PC-3 (cell line): ENCODE measurements at regions of chr12 and their contacts with region 1.

Region 1: DNA sequence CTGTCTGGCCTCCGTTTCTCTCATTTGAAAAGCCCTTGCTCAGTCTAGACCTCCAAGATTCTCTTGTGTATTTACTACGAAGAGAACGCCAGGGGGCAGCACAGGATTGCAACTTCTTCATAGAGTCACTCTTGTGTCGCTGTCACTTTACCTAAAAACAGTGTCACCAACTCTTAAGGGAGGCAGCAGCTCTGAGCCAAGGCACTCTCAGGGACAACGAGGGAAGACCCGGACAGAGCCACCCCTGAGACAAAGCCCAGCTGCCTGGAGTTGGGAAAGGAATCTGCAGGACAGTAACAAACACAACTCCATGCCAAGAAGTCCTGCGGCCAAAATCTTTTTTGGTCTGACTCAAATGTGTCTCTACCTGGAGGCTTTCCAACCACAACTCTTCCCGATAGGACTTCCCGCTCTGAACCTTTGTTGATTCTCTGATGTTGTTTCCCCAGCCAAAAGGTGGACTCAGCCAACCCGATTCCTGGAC is 9.6 kb upstream of the RPAP3 start:
- DNase-seq: peak; percentile 91
- ATAC-seq: peak; percentile 74
- H3K4me3 ChIP-seq: peak overlapping the region; percentile 50
- H3K27ac ChIP-seq: no peak overlapping the region
- H3K4me1 ChIP-seq: peaks cover 13% of the 10 kb centered on the region; the same call in 1 of the 2 replicates
- H3K27me3 ChIP-seq: no peaks in the 10 kb centered on the region
- CTCF ChIP-seq: peak; percentile 96

Region 2: DNA sequence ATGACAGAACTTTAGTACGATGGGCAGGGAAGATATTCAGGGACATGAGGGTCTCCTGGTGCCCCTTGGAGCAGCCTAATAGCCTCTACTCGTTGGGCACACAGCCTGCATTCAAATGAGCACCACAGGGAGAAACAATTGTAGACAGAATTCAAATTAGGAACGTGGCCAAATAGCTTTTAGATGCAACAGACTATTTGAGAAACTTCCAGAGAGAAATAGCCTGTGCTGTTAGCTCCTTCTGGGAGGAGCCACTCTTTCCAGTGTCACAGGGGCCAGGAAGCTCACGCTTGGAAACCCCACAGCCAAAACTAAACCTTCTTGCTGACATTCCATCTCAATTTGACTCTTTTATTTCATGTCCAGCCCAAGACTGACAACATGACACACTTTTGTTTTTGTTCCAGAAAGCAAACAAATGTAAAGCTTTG is 124.1 kb before region 1 on chr12:
- CTCF ChIA-PET with region 1: no interaction called
- POLR2A ChIA-PET with region 1: no interaction called
- intact Hi-C with region 1: no loop called
- DNase-seq: no peak
- ATAC-seq: no peak
- H3K4me3 ChIP-seq: no peak overlapping the region
- H3K27ac ChIP-seq: no peak overlapping the region
- H3K4me1 ChIP-seq: no peaks in the 10 kb centered on the region
- H3K27me3 ChIP-seq: no peaks in the 10 kb centered on the region
- CTCF ChIP-seq: no peak

Region 3: GRCh38 chr12:47744000-47744651 is 28.7 kb after region 1 on chr12:
- CTCF ChIA-PET with region 1: no interaction called
- POLR2A ChIA-PET with region 1: no interaction called
- intact Hi-C with region 1: no loop called
- DNase-seq: peak; percentile 85
- ATAC-seq: peak; percentile 86
- H3K4me3 ChIP-seq: no peak overlapping the region
- H3K27ac ChIP-seq: no peak overlapping the region
- H3K4me1 ChIP-seq: peaks cover 13% of the 10 kb centered on the region; the same call in 1 of the 2 replicates
- H3K27me3 ChIP-seq: no peaks in the 10 kb centered on the region
- CTCF ChIP-seq: peak; percentile 90

Region 4: DNA sequence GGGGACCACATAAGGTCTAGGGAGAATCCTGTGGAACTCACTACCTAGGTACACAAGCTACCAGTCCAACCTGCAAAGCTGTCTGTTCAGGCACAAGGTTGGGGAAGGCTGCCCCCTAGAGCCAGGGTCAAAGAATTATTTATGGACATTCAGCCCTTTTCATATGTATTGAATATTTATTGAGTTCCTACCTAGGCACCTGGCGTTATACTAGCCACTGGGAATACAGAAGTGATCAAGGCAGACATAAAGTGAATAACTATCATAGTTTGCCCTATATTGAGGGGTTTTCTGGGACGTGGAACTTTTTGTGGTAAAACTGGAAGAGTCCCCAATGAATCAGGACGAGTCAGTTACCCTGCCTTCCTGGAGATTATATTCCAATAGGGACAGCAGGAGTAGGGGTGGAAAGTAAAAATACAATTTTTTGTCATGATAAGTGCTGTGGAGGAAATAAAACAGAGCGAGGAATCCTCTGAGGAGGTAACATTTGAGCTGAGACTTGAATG is 51.8 kb after region 1 on chr12:
- CTCF ChIA-PET with region 1: no interaction called
- POLR2A ChIA-PET with region 1: no interaction called
- intact Hi-C with region 1: loop called (anchors 2 kb)
- DNase-seq: peak; percentile 64
- ATAC-seq: peak; percentile 24; the same call in 1 of the 2 replicates
- H3K4me3 ChIP-seq: no peak overlapping the region
- H3K27ac ChIP-seq: no peak overlapping the region
- H3K4me1 ChIP-seq: peaks cover 13% of the 10 kb centered on the region
- H3K27me3 ChIP-seq: no peaks in the 10 kb centered on the region
- CTCF ChIP-seq: peak; percentile 78

Region 5: DNA sequence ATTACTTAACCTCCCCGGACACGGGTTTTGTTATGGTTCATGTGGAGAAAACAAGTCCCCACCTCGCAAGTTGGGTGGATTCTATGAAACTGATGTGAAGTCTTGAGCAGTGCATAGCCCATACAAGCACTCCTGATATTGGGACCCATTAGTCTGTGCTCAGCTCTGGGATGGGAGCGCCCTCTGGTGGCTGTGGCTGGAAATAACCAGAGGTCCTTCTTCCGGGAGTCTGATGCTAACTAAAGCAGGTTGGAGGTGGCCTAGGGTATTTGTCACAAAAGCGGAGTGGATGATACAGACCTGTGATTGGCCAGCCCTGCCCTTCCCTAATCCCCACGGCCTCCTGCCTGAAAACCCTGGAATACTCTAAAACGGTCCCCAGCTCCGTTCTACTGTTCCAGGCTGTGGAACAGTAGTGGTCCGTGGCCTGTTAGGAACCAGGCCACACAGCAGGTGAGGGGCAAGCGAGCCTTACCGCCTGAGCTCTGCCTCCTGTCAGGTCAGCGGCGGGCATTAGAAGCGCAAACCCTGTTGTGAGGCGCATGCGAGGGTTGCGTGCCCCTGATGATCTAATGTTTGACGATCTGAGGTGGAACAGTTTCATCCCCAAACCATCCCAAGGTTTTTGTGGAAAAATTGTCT is 64.0 kb after region 1 on chr12:
- CTCF ChIA-PET with region 1: interaction called, 5 read pairs
- POLR2A ChIA-PET with region 1: no interaction called
- intact Hi-C with region 1: loop called (anchors 1 kb)
- DNase-seq: peak; percentile 94
- ATAC-seq: peak; percentile 81
- H3K4me3 ChIP-seq: no peak overlapping the region
- H3K27ac ChIP-seq: no peak overlapping the region
- H3K4me1 ChIP-seq: peaks cover 23% of the 10 kb centered on the region
- H3K27me3 ChIP-seq: no peaks in the 10 kb centered on the region
- CTCF ChIP-seq: peak; percentile 96